Activated CD4-positive, alpha-beta memory T cell treated with anti-CD3 and anti-CD28 coated beads, Interleukin-2, amount 10 ng/mL, durations not matched to agents 7 days and 5 days (primary cell): ENCODE measurements at regions of chr20 and their contacts with region 1.

Region 1: GRCh38 chr20:18496740-18497592 is at the start of gene RBBP9:
- DNase-seq: peak; percentile 79
- H3K4me3 Mint-ChIP-seq: peak within 1 kb of the TSS; percentile 98
- H3K27ac Mint-ChIP-seq: peak within 1 kb of the TSS; percentile 77
- H3K4me1 Mint-ChIP-seq: peaks cover 26% of the 10 kb centered on the region
- H3K27me3 Mint-ChIP-seq: no peaks in the 10 kb centered on the region
- total RNA-seq, gene RBBP9: 18.0 to 20.4 TPM

Region 2: GRCh38 chr20:18466894-18467730 is 29.9 kb before region 1 on chr20 and contains the starts of genes DZANK1 and POLR3F:
- CTCF ChIA-PET with region 1: interaction called, 4 read pairs
- POLR2A ChIA-PET with region 1: interaction called, 37 read pairs
- DNase-seq: peak; percentile 94
- H3K4me3 Mint-ChIP-seq: peak within 1 kb of the TSS; percentile 95
- H3K27ac Mint-ChIP-seq: peak within 1 kb of the TSS; percentile 81
- H3K4me1 Mint-ChIP-seq: peaks cover 30% of the 10 kb centered on the region
- H3K27me3 Mint-ChIP-seq: no peaks in the 10 kb centered on the region
- total RNA-seq, gene DZANK1: 1.4 to 1.5 TPM
- total RNA-seq, gene POLR3F: 7.7 to 10.1 TPM

Region 3: GRCh38 chr20:18481596-18481995 is 15.4 kb before region 1 on chr20:
- CTCF ChIA-PET with region 1: no interaction called
- POLR2A ChIA-PET with region 1: interaction called, 13 read pairs
- DNase-seq: no peak
- H3K4me3 Mint-ChIP-seq: no peak overlapping the region
- H3K27ac Mint-ChIP-seq: no peak overlapping the region
- H3K4me1 Mint-ChIP-seq: no peaks in the 10 kb centered on the region
- H3K27me3 Mint-ChIP-seq: no peaks in the 10 kb centered on the region